ENCODE measurements at regions of chr13 and their contacts with region 1.

Region 1: GRCh38 chr13:99606324-99607066 is 105.2 kb downstream of the TM9SF2 start:
- DNase-seq: peak; percentile 92
- H3K4me3 Mint-ChIP-seq: peak within 1 kb of the TSS; percentile 82
- H3K27ac Mint-ChIP-seq: peak within 1 kb of the TSS; percentile 75
- H3K4me1 Mint-ChIP-seq: peaks cover 23% of the 10 kb centered on the region
- H3K27me3 Mint-ChIP-seq: no peaks in the 10 kb centered on the region

Region 2: GRCh38 chr13:99057310-99057975 is 549.1 kb before region 1 on chr13:
- CTCF ChIA-PET with region 1: no interaction called
- intact Hi-C with region 1: loop called (anchors 10 kb)
- DNase-seq: no peak
- H3K4me3 Mint-ChIP-seq: no peak overlapping the region
- H3K27ac Mint-ChIP-seq: no peak overlapping the region
- H3K4me1 Mint-ChIP-seq: peaks cover 68% of the 10 kb centered on the region
- H3K27me3 Mint-ChIP-seq: no peaks in the 10 kb centered on the region

Region 3: DNA sequence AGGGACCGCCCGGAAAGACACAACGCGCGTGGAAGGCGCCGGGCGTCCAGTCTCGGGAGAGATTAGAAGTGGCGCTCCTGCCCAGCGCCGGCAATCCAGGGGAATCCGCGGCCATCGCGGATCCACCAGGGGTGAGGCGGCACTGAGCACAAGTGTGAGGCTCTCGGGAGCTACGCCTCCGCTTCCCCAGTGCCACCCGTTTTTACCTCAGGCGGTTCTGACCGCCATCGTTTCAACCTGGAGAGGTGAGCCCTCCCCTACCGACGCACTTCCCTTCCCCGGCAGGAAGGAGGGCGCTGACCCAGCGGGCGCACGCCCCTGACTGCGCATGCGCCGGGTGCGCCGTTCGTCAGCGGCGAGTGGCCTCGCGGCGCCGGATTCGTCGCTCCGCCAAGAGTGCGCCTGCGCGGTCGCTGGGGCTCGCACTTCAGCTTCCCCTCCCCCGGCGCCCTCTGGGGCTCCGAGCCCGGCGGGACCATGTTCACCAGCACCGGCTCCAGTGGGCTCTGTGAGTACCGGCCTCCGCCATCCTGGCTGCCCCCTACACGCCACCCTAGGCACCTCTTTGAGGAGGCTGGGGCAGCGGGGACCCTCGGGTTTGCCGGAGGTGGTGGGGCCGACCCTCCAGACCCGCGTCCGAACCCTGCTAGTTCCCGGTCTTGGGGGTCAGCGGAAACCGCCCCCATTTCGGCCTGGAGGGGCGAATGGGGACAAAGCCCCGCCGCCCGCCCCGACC is 405.9 kb before region 1 on chr13 and contains the start of gene UBAC2:
- CTCF ChIA-PET with region 1: no interaction called
- intact Hi-C with region 1: loop called (anchors 5 kb)
- DNase-seq: peak; percentile 95
- H3K4me3 Mint-ChIP-seq: peak within 1 kb of the TSS; percentile 91
- H3K27ac Mint-ChIP-seq: peak within 1 kb of the TSS; percentile 90
- H3K4me1 Mint-ChIP-seq: peaks cover 60% of the 10 kb centered on the region
- H3K27me3 Mint-ChIP-seq: no peaks in the 10 kb centered on the region
- total RNA-seq, gene UBAC2: 43.4 to 44.9 TPM

Region 4: DNA sequence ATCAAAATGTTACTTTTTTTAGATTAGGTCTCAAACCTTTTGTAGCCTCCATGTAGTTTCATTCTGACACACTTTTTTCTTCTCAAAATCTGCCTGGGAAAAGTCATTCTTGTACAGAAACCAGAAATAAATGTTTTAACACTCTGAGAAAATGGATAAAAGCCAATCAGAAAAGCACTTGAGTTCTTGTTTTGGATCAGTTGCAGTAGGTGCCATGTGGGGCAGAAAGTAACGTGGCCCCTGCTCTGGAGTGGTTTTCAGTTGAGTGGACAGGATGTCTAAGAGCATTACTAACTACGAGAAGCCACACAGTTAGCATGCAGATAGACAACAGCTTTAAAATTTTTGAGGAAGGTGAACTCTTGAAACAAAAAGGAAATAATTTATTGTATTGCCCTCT is 318.4 kb before region 1 on chr13:
- CTCF ChIA-PET with region 1: no interaction called
- intact Hi-C with region 1: loop called (anchors 5 kb)
- DNase-seq: peak; percentile 89
- H3K4me3 Mint-ChIP-seq: peak overlapping the region; percentile 37
- H3K27ac Mint-ChIP-seq: peak overlapping the region; percentile 89
- H3K4me1 Mint-ChIP-seq: peaks cover 80% of the 10 kb centered on the region
- H3K27me3 Mint-ChIP-seq: no peaks in the 10 kb centered on the region

Region 5: GRCh38 chr13:99464441-99464949 is 142.0 kb before region 1 on chr13:
- CTCF ChIA-PET with region 1: no interaction called
- intact Hi-C with region 1: loop called (anchors 5 kb)
- DNase-seq: peak; percentile 22
- H3K4me3 Mint-ChIP-seq: peak overlapping the region; percentile 28
- H3K27ac Mint-ChIP-seq: peak overlapping the region; percentile 80
- H3K4me1 Mint-ChIP-seq: peaks cover 30% of the 10 kb centered on the region
- H3K27me3 Mint-ChIP-seq: no peaks in the 10 kb centered on the region

Region 6: DNA sequence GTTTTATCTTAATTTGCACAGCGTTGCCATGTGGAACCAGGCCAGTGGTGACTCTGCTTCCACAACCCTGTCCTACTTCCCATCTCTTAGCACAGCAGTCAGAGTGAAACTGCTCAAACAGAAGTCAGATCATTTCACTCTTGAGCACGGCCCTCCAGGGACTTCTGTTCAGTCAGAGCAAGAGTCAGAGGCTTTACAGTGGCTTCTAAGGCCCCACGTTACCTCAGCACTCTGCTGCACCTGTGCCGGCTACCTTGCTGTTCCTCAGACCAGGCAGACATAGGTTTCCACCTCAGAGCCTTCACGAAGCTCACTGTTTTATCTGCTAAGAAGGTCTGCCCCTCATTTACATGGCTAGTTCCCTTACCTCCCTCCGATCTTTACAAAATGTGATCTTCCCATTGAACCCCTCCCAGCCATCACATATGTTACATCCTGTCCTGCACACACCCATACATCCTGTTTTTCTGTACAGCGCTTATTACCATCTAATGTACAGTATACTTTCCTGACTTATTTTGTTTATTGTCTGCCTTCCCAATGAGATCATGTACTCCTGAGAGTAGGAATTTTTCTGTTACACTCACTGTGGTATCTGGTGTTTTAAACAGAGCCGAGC is 63.6 kb before region 1 on chr13:
- CTCF ChIA-PET with region 1: no interaction called
- intact Hi-C with region 1: loop called (anchors 1 kb)
- DNase-seq: peak; percentile 80
- H3K4me3 Mint-ChIP-seq: no peak overlapping the region
- H3K27ac Mint-ChIP-seq: no peak overlapping the region
- H3K4me1 Mint-ChIP-seq: peaks cover 47% of the 10 kb centered on the region
- H3K27me3 Mint-ChIP-seq: no peaks in the 10 kb centered on the region

Region 7: DNA sequence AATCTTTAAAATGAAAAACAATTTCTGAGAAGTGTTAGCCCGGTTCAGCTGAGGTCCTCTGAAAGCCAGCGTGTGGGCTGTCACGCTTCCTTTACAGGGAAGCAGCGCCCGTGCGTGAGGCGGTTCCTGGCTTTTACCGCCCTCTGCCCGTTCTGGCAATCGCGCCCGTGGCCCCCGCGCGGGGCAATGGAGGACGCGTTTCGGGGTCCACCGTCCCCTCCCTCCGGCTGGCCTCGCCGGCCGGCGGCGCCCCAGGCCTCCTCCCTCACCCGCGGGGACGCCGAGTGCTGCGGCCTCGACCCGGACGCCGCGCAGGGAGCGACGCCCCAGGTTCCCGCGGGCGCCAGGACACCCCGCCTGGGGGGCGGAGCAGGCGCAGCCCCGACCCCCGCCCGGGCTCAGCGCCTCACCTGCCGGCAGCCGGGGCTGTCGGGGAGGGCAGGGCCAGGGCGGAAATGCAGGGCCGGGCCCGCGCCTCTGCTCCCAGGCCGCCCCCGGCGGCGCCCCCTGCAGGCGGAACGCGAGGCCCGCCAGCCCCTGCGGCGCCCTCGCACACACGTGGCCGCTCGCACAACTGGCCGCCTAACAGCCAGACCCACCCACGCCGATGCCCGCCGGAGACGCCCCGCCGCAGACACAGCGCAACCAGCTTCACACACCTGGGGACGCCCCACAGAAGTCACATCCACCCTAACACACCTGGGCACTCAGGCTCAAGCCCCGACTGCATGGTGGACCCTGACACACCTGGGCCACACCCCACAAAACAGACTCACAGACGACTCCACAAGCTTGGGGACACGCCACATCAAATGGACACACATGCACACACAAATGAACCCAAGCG is 982.1 kb after region 1 on chr13 and contains the start of gene GGACT:
- CTCF ChIA-PET with region 1: interaction called, 3 read pairs
- intact Hi-C with region 1: loop called (anchors 2 kb)
- DNase-seq: peak; percentile 84
- H3K4me3 Mint-ChIP-seq: peak within 1 kb of the TSS; percentile 75
- H3K27ac Mint-ChIP-seq: peak within 1 kb of the TSS; percentile 87
- H3K4me1 Mint-ChIP-seq: peaks cover 39% of the 10 kb centered on the region
- H3K27me3 Mint-ChIP-seq: no peaks in the 10 kb centered on the region
- total RNA-seq, gene GGACT: 3.9 to 6.6 TPM